PC-3 (cell line): ENCODE measurements at regions of chr14 and their contacts with region 1.

Region 1: GRCh38 chr14:81105961-81106360 is 114.8 kb downstream of the GTF2A1 start:
- DNase-seq: no peak
- ATAC-seq: no peak
- H3K4me3 ChIP-seq: no peak overlapping the region
- H3K27ac ChIP-seq: no peak overlapping the region
- H3K4me1 ChIP-seq: no peaks in the 10 kb centered on the region
- H3K27me3 ChIP-seq: no peaks in the 10 kb centered on the region
- CTCF ChIP-seq: no peak

Region 2: GRCh38 chr14:81127785-81128184 is 21.8 kb after region 1 on chr14:
- CTCF ChIA-PET with region 1: no interaction called
- POLR2A ChIA-PET with region 1: no interaction called
- intact Hi-C with region 1: loop called (anchors 2 kb)
- DNase-seq: no peak
- ATAC-seq: no peak
- H3K4me3 ChIP-seq: no peak overlapping the region
- H3K27ac ChIP-seq: no peak overlapping the region
- H3K4me1 ChIP-seq: no peaks in the 10 kb centered on the region
- H3K27me3 ChIP-seq: peaks cover 5% of the 10 kb centered on the region; the same call in 1 of the 2 replicates
- CTCF ChIP-seq: no peak